ENCODE measurements at regions of chr2 and their contacts with region 1.

Region 1: GRCh38 chr2:206392118-206392517 is 51.2 kb upstream of the ADAM23 start:
- DNase-seq: no peak
- H3K4me3 Mint-ChIP-seq: no peak overlapping the region
- H3K27ac Mint-ChIP-seq: no peak overlapping the region
- H3K4me1 Mint-ChIP-seq: no peaks in the 10 kb centered on the region
- H3K27me3 Mint-ChIP-seq: no peaks in the 10 kb centered on the region

Region 2: GRCh38 chr2:206556357-206556949 is 164.3 kb after region 1 on chr2:
- intact Hi-C with region 1: loop called (anchors 5 kb)
- DNase-seq: no peak
- H3K4me3 Mint-ChIP-seq: no peak overlapping the region
- H3K27ac Mint-ChIP-seq: no peak overlapping the region
- H3K4me1 Mint-ChIP-seq: peaks cover 12% of the 10 kb centered on the region
- H3K27me3 Mint-ChIP-seq: peaks cover 27% of the 10 kb centered on the region

Region 3: DNA sequence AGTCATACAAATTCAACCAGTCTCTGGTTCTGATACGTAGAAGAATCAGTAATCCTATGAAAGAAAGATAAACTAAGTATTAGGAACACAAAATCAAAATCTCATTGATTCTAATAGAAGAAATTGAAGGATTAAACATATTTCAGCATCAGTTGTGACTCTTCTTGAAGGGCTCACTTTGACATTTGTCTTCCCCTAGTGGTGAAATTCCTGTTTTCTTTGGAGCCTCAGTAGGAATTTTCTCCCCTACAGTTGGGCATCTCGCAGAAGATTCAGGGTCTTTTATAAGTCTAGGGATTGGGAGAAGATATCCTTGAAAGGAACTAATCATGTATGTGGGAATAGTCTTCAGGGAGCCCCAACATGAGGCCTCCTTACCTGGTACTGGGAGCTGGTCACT is 1756.7 kb after region 1 on chr2:
- intact Hi-C with region 1: loop called (anchors 5 kb)
- DNase-seq: no peak
- H3K4me3 Mint-ChIP-seq: no peak overlapping the region
- H3K27ac Mint-ChIP-seq: no peak overlapping the region
- H3K4me1 Mint-ChIP-seq: no peaks in the 10 kb centered on the region
- H3K27me3 Mint-ChIP-seq: peaks cover 14% of the 10 kb centered on the region

Measured in activated T-helper 2 cell treated with anti-CD3 and anti-CD28 coated beads, Interferon-gamma antibody, Interleukin-2, Interleukin-4, amounts not matched to agents 10 μg/mL and 5 μg/mL and 100 μg/mL, durations not matched to agents 14 hours and 24 hours and 36 hours (primary cell).